PC-3 (cell line): ENCODE measurements at regions of chrX and their contacts with region 1.

Region 1: DNA sequence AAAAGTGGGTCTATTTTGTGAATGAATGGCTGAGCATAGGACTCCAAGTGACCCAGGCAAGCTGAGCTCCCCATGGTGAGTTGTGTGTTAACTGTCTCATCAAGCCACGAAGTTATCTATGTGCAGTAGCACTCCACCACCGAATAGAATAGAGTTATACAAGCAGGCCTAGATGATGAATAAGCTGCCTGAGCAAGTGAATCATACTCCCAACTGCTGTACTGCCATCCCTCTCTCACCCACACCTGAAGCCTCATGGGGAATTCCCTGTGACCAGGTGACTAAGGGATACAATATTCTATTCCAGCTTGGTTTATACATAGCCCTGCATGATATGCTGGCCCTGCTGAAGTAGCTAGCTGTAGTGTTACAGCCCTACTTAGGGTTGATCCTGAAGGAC is 38.7 kb downstream of the KDM5C start:
- DNase-seq: peak; percentile 79
- ATAC-seq: peak; percentile 66
- H3K4me3 ChIP-seq: no peak overlapping the region
- H3K27ac ChIP-seq: peak overlapping the region; percentile 35
- H3K4me1 ChIP-seq: peaks cover 12% of the 10 kb centered on the region
- H3K27me3 ChIP-seq: no peaks in the 10 kb centered on the region
- CTCF ChIP-seq: no peak

Region 2: GRCh38 chrX:53128097-53128749 is 58.1 kb before region 1 on chrX:
- CTCF ChIA-PET with region 1: no interaction called
- POLR2A ChIA-PET with region 1: no interaction called
- intact Hi-C with region 1: loop called (anchors 2 kb)
- DNase-seq: peak; percentile 46
- ATAC-seq: peak; percentile 84
- H3K4me3 ChIP-seq: no peak overlapping the region
- H3K27ac ChIP-seq: peak overlapping the region; percentile 41
- H3K4me1 ChIP-seq: peaks cover 26% of the 10 kb centered on the region
- H3K27me3 ChIP-seq: no peaks in the 10 kb centered on the region
- CTCF ChIP-seq: no peak

Region 3: DNA sequence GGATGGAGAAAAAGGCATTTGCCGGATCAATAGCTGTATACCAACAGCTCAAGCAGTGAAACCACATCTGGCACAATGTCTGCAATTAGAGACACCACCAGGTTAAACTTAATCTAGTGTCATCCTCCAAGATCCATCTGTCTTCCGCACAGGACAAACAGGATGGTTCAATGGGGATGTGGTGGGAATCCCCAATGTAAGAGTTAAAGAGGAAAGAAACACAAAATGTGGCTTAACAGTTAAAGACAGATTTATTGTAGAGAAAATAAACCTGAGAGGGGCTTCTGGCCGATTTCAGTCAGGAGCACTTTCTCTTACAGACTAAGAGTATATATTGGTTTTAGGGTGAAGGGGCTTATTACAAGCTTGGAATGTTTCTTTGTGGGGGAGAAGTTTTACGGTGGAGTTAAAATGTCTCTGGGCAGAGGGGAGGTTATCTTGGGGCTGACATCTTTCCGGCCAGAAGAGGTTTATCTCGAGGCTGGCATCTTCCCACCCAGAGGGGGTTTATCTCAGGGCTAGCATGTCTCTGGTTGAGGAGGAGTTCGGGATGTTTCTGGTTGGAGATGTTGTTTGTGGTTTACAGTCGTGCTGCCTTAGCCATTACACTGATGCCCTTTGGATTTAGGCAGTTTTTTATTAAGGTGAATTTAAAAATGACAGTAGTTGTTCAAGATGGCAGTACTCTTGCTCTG is 30.7 kb before region 1 on chrX:
- CTCF ChIA-PET with region 1: no interaction called
- POLR2A ChIA-PET with region 1: no interaction called
- intact Hi-C with region 1: no loop called
- DNase-seq: no peak
- ATAC-seq: no peak
- H3K4me3 ChIP-seq: no peak overlapping the region
- H3K27ac ChIP-seq: no peak overlapping the region
- H3K4me1 ChIP-seq: no peaks in the 10 kb centered on the region
- H3K27me3 ChIP-seq: no peaks in the 10 kb centered on the region
- CTCF ChIP-seq: no peak

Region 4: DNA sequence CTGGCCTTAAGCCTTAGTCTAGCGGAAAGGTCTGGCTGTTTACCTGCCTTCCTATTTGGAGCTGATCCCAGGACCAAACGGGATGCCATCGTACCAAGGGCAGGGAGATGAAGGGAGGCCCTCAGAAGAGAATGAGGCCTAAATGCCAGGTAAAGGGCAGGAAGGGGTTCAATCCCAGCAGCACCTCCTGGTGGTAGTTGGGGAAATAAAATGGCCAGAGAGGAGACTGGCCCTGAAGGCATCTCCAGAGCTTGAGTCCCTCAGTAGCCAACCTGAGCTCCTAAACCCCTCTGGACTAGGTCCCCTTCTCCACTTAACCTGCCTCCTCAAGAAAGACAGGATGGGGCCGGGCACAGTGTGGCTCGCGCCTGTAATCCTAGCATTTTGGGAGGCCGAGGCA is 15.0 kb before region 1 on chrX:
- CTCF ChIA-PET with region 1: no interaction called
- POLR2A ChIA-PET with region 1: no interaction called
- intact Hi-C with region 1: no loop called
- DNase-seq: no peak
- ATAC-seq: no peak
- H3K4me3 ChIP-seq: no peak overlapping the region
- H3K27ac ChIP-seq: no peak overlapping the region
- H3K4me1 ChIP-seq: no peaks in the 10 kb centered on the region
- H3K27me3 ChIP-seq: no peaks in the 10 kb centered on the region
- CTCF ChIP-seq: no peak

Region 5: GRCh38 chrX:53481816-53482465 is 295.6 kb after region 1 on chrX:
- CTCF ChIA-PET with region 1: no interaction called
- POLR2A ChIA-PET with region 1: no interaction called
- intact Hi-C with region 1: no loop called
- DNase-seq: peak; percentile 81
- ATAC-seq: peak; percentile 80
- H3K4me3 ChIP-seq: 0 out of 2 replicates have a peak overlapping the region, but pooled peaks have one; percentile 14
- H3K27ac ChIP-seq: no peak overlapping the region
- H3K4me1 ChIP-seq: 0 out of 2 replicates have a peak, but pooled peaks cover 5% of the 10 kb centered on the region
- H3K27me3 ChIP-seq: no peaks in the 10 kb centered on the region
- CTCF ChIP-seq: peak; percentile 85